Transverse colon (tissue), 4 donors: ENCODE measurements at regions of chr9 and their contacts with region 1.

Region 1: GRCh38 chr9:12091865-12092527 is 601.2 kb upstream of the TYRP1 start:
- DNase-seq: no peak
- H3K4me3 ChIP-seq: no peak overlapping the region
- H3K27ac ChIP-seq: no peak overlapping the region
- H3K4me1 ChIP-seq: no peaks in the 10 kb centered on the region
- H3K27me3 ChIP-seq: no peaks in the 10 kb centered on the region
- CTCF ChIP-seq: no peak
- EP300 ChIP-seq: no peak
- POLR2A ChIP-seq: no peak

Region 2: GRCh38 chr9:11973511-11973910 is 118.5 kb before region 1 on chr9:
- in situ Hi-C with region 1: no loop called
- intact Hi-C with region 1: no loop called
- DNase-seq: no peak
- H3K4me3 ChIP-seq: no peak overlapping the region
- H3K27ac ChIP-seq: no peak overlapping the region
- H3K4me1 ChIP-seq: no peaks in the 10 kb centered on the region
- H3K27me3 ChIP-seq: no peaks in the 10 kb centered on the region
- CTCF ChIP-seq: no peak
- EP300 ChIP-seq: no peak
- POLR2A ChIP-seq: no peak

Region 3: GRCh38 chr9:11992866-11993265 is 99.1 kb before region 1 on chr9:
- in situ Hi-C with region 1: no loop called
- intact Hi-C with region 1: no loop called
- DNase-seq: no peak
- H3K4me3 ChIP-seq: no peak overlapping the region
- H3K27ac ChIP-seq: no peak overlapping the region
- H3K4me1 ChIP-seq: no peaks in the 10 kb centered on the region
- H3K27me3 ChIP-seq: no peaks in the 10 kb centered on the region
- CTCF ChIP-seq: no peak
- EP300 ChIP-seq: no peak
- POLR2A ChIP-seq: no peak

Region 4: GRCh38 chr9:13590996-13591395 is 1499.0 kb after region 1 on chr9:
- in situ Hi-C with region 1: no loop called
- intact Hi-C with region 1: loop called (anchors 5 kb)
- DNase-seq: no peak
- H3K4me3 ChIP-seq: no peak overlapping the region
- H3K27ac ChIP-seq: no peak overlapping the region
- H3K4me1 ChIP-seq: peaks cover 0 to 8% (median 0%) of the 10 kb centered on the region in 4 donors
- H3K27me3 ChIP-seq: no peaks in the 10 kb centered on the region
- CTCF ChIP-seq: no peak
- EP300 ChIP-seq: no peak
- POLR2A ChIP-seq: no peak